ENCODE measurements at regions of chr3 and their contacts with region 1.

Region 1: GRCh38 chr3:64992530-64993285 is 304.9 kb upstream of the ADAMTS9 start:
- DNase-seq: no peak
- ATAC-seq: peak; percentile 56 to 57
- H3K4me3 ChIP-seq: no peak overlapping the region
- H3K27ac ChIP-seq: no peak overlapping the region
- H3K4me1 ChIP-seq: peaks cover 3% of the 10 kb centered on the region
- H3K27me3 ChIP-seq: no peaks in the 10 kb centered on the region

Region 2: DNA sequence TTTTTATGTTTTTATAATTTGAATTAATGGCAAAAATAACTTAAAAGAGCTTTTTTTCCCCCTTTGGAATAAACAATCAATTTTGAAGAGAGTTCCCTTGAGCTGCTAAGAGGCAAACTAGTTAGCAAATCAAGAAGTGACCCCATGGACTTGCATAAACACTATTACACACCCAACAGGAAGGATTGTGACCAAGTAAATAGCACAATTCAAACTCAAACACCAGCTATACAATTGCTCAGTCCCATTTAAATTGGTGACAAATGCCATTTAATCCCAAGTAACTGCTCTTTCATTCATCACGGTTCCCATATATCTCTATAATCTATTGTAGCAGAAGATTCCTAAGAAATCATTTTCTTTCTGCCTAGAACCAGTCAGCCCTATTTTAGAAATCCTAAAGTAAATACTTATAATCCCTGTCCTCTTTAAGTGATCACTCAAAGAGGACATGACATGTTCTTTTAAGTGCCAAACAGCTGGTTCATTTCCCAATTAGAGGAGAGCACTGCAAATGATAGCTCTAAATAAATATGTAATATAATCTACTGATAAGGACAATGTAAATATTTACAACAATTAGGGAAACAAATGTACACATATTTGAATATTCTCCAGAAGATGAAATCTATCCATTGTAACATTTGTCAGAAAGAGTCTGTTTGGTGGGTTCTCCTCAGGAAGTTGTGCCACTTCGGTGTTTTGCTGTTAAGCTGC is 167.1 kb before region 1 on chr3:
- intact Hi-C with region 1: no loop called
- DNase-seq: no peak
- ATAC-seq: no peak
- H3K4me3 ChIP-seq: no peak overlapping the region
- H3K27ac ChIP-seq: no peak overlapping the region
- H3K4me1 ChIP-seq: peaks cover 3% of the 10 kb centered on the region
- H3K27me3 ChIP-seq: no peaks in the 10 kb centered on the region

Region 3: DNA sequence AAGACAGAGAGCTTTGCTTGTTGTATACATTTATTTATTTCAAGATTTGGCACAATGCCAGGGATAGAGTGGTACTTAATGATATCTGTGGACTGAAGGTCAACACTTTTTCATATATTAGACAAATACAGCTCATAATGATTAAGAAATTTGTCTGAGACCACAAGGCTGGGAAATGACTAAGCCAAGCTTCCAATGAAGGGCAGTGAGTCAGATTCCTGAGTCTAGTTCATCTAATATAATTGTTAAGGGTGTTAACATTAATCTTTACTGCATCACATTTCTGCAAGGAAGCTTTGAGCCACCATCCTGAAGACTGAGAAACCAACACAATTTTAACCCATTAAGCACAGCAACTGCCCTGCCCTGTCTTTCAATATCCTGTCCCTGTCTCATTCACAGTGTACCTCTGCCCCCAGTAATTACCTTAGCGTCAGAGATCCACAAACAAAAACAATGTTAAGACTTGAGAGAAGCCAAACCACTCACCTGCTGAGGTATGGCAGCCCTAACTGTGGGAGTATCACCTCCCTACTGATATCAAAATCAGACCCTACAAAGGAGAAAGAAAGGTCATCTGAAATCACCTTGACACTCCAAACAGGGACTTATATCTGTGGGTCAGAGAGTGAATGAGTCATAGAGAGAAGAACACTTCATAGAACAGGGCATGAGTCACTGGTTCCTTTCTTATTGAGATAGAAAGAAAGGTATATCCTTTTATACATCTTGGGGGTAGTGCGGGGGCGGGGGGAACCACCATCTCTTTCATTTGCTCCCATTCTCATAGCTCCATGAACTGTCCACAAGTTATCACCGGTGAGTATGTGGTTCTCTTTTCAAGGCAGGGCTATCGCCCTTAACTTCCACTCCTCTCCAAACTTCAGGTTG is 971.3 kb after region 1 on chr3:
- intact Hi-C with region 1: loop called in 1 of 4 experiments (anchors 5 kb)
- DNase-seq: no peak
- ATAC-seq: peak in 1 of 2 donors; percentile 81
- H3K4me3 ChIP-seq: no peak overlapping the region
- H3K27ac ChIP-seq: no peak overlapping the region
- H3K4me1 ChIP-seq: peaks cover 12% of the 10 kb centered on the region
- H3K27me3 ChIP-seq: no peaks in the 10 kb centered on the region

Measured in right cardiac atrium (tissue), 5 donors.